Naive thymus-derived CD4-positive, alpha-beta T cell (primary cell): ENCODE measurements at regions of chr1 and their contacts with region 1.

Region 1: GRCh38 chr1:212256369-212256768 is 28.8 kb upstream of the PPP2R5A start:
- DNase-seq: peak in 8 of 9 donors; percentile 30 to 73 (median 64)
- ATAC-seq: peak; percentile 87
- H3K4me3 ChIP-seq: peak overlapping the region; percentile 31
- H3K4me3 Mint-ChIP-seq: peak overlapping the region; percentile 67 to 89 (median 82)
- H3K27ac ChIP-seq: no peak overlapping the region
- H3K27ac Mint-ChIP-seq: peak overlapping the region; percentile 36 to 88 (median 80)
- H3K4me1 ChIP-seq: peaks cover 56 to 60% of the 10 kb centered on the region in 2 donors
- H3K4me1 Mint-ChIP-seq: peaks cover 47 to 89% (median 76%) of the 10 kb centered on the region in 7 donors
- H3K27me3 ChIP-seq: no peaks in the 10 kb centered on the region
- H3K27me3 Mint-ChIP-seq: no peaks in the 10 kb centered on the region

Region 2: DNA sequence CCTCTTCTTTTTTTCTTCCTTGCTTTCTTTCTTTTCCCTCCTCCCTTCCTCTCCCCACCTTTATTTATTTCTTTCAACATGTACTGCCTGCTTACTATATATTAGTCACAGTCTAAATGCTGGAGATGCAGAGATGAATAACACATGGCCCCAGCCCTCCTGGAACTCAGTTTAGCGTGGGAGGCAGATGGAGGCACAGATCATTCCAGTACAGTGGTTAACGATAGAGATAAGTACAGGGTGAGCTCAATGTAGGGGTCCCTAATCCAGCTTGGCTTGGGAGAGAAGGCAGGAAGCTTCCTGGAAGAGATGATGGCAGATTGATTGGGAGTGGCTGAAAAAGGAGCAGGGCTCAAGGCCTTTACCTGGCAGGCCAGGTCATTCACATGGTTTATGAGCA is 26.7 kb before region 1 on chr1:
- CTCF ChIA-PET with region 1: no interaction called
- POLR2A ChIA-PET with region 1: no interaction called
- intact Hi-C with region 1: loop called in 1 of 2 experiments (anchors 5 kb)
- DNase-seq: no peak
- ATAC-seq: no peak
- H3K4me3 ChIP-seq: no peak overlapping the region
- H3K4me3 Mint-ChIP-seq: no peak overlapping the region
- H3K27ac ChIP-seq: no peak overlapping the region
- H3K27ac Mint-ChIP-seq: peak overlapping the region in 1 of 9 donors; percentile 12
- H3K4me1 ChIP-seq: peaks cover 14 to 23% of the 10 kb centered on the region in 2 donors
- H3K4me1 Mint-ChIP-seq: peaks cover 19 to 53% (median 29%) of the 10 kb centered on the region in 7 donors
- H3K27me3 ChIP-seq: no peaks in the 10 kb centered on the region
- H3K27me3 Mint-ChIP-seq: no peaks in the 10 kb centered on the region

Region 3: GRCh38 chr1:212244441-212244840 is 11.9 kb before region 1 on chr1:
- CTCF ChIA-PET with region 1: no interaction called
- POLR2A ChIA-PET with region 1: interaction called, 3 read pairs
- intact Hi-C with region 1: loop called in 1 of 2 experiments (anchors 1 kb)
- DNase-seq: no peak
- ATAC-seq: no peak
- H3K4me3 ChIP-seq: no peak overlapping the region
- H3K4me3 Mint-ChIP-seq: no peak overlapping the region
- H3K27ac ChIP-seq: no peak overlapping the region
- H3K27ac Mint-ChIP-seq: peak overlapping the region in 1 of 9 donors; percentile 90
- H3K4me1 ChIP-seq: no peaks in the 10 kb centered on the region
- H3K4me1 Mint-ChIP-seq: peaks cover 11 to 22% (median 18%) of the 10 kb centered on the region in 7 donors
- H3K27me3 ChIP-seq: peaks cover 0 to 3% of the 10 kb centered on the region in 2 donors
- H3K27me3 Mint-ChIP-seq: peaks cover 0 to 9% (median 0%) of the 10 kb centered on the region in 5 donors